PC-9 (cell line): ENCODE measurements at regions of chr14 and their contacts with region 1.

Region 1: GRCh38 chr14:103104654-103105452 is 10.3 kb downstream of the EXOC3L4 start:
- DNase-seq: peak; percentile 76 to 93
- H3K4me3 ChIP-seq: peak overlapping the region; percentile 54; the same call in 1 of the 2 replicates
- H3K27ac ChIP-seq: no peak overlapping the region
- H3K4me1 ChIP-seq: peaks cover 68% of the 10 kb centered on the region
- H3K27me3 ChIP-seq: no peaks in the 10 kb centered on the region
- CTCF ChIP-seq: peak; percentile 100

Region 2: GRCh38 chr14:101957406-101958234 is 1147.2 kb before region 1 on chr14:
- CTCF ChIA-PET with region 1: no interaction called
- POLR2A ChIA-PET with region 1: interaction called, 10 read pairs
- intact Hi-C with region 1: no loop called
- DNase-seq: no peak
- H3K4me3 ChIP-seq: no peak overlapping the region
- H3K27ac ChIP-seq: no peak overlapping the region
- H3K4me1 ChIP-seq: peaks cover 14% of the 10 kb centered on the region
- H3K27me3 ChIP-seq: no peaks in the 10 kb centered on the region
- CTCF ChIP-seq: no peak

Region 3: GRCh38 chr14:103121846-103122584 is 17.2 kb after region 1 on chr14:
- CTCF ChIA-PET with region 1: interaction called, 43 read pairs
- POLR2A ChIA-PET with region 1: interaction called, 6 read pairs
- intact Hi-C with region 1: loop called (anchors 1 kb)
- DNase-seq: peak; percentile 100
- H3K4me3 ChIP-seq: peak overlapping the region; percentile 81
- H3K27ac ChIP-seq: peak overlapping the region; percentile 86
- H3K4me1 ChIP-seq: peaks cover 55% of the 10 kb centered on the region
- H3K27me3 ChIP-seq: no peaks in the 10 kb centered on the region
- CTCF ChIP-seq: no peak

Region 4: GRCh38 chr14:103160866-103161391 is 56.1 kb after region 1 on chr14:
- CTCF ChIA-PET with region 1: interaction called, 10 read pairs
- POLR2A ChIA-PET with region 1: interaction called, 16 read pairs
- intact Hi-C with region 1: loop called (anchors 1 kb)
- DNase-seq: peak; percentile 95 to 100
- H3K4me3 ChIP-seq: no peak overlapping the region
- H3K27ac ChIP-seq: peak overlapping the region; percentile 89
- H3K4me1 ChIP-seq: peaks cover 68% of the 10 kb centered on the region
- H3K27me3 ChIP-seq: no peaks in the 10 kb centered on the region
- CTCF ChIP-seq: no peak

Region 5: DNA sequence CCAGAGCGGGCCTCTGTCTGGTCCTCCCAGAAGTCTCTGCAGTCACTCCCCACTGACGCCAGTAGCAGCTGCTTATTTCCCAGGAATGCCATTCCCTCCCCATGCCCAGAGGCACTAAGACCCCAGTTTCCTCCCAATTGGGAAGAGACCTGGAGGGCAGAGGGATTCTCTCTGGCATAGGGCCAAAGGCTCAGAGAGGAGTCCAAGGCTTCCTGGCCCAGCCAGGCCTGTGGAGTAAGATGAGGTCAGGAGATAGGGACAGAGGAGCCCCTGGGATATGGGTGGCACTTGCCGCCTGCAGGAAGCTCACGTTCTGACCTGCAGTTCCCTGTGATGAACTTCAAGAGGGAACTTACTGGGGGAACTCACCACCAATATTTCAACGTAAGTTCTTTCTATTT is 87.5 kb after region 1 on chr14:
- CTCF ChIA-PET with region 1: no interaction called
- POLR2A ChIA-PET with region 1: no interaction called
- intact Hi-C with region 1: no loop called
- DNase-seq: no peak
- H3K4me3 ChIP-seq: no peak overlapping the region
- H3K27ac ChIP-seq: peak overlapping the region; percentile 7; the same call in 1 of the 2 replicates
- H3K4me1 ChIP-seq: peaks cover 49% of the 10 kb centered on the region
- H3K27me3 ChIP-seq: no peaks in the 10 kb centered on the region
- CTCF ChIP-seq: no peak

Region 6: GRCh38 chr14:103292426-103293374 is 187.8 kb after region 1 on chr14:
- CTCF ChIA-PET with region 1: interaction called, 18 read pairs
- POLR2A ChIA-PET with region 1: no interaction called
- intact Hi-C with region 1: loop called (anchors 1 kb)
- DNase-seq: peak; percentile 68 to 90
- H3K4me3 ChIP-seq: no peak overlapping the region
- H3K27ac ChIP-seq: no peak overlapping the region
- H3K4me1 ChIP-seq: peaks cover 34% of the 10 kb centered on the region
- H3K27me3 ChIP-seq: no peaks in the 10 kb centered on the region
- CTCF ChIP-seq: peak; percentile 100

Region 7: GRCh38 chr14:103391048-103391447 is 286.2 kb after region 1 on chr14:
- CTCF ChIA-PET with region 1: interaction called, 11 read pairs
- POLR2A ChIA-PET with region 1: no interaction called
- intact Hi-C with region 1: loop called (anchors 10 kb)
- DNase-seq: peak; percentile 45 to 72
- H3K4me3 ChIP-seq: no peak overlapping the region
- H3K27ac ChIP-seq: no peak overlapping the region
- H3K4me1 ChIP-seq: peaks cover 57% of the 10 kb centered on the region
- H3K27me3 ChIP-seq: no peaks in the 10 kb centered on the region
- CTCF ChIP-seq: peak; percentile 97

Region 8: DNA sequence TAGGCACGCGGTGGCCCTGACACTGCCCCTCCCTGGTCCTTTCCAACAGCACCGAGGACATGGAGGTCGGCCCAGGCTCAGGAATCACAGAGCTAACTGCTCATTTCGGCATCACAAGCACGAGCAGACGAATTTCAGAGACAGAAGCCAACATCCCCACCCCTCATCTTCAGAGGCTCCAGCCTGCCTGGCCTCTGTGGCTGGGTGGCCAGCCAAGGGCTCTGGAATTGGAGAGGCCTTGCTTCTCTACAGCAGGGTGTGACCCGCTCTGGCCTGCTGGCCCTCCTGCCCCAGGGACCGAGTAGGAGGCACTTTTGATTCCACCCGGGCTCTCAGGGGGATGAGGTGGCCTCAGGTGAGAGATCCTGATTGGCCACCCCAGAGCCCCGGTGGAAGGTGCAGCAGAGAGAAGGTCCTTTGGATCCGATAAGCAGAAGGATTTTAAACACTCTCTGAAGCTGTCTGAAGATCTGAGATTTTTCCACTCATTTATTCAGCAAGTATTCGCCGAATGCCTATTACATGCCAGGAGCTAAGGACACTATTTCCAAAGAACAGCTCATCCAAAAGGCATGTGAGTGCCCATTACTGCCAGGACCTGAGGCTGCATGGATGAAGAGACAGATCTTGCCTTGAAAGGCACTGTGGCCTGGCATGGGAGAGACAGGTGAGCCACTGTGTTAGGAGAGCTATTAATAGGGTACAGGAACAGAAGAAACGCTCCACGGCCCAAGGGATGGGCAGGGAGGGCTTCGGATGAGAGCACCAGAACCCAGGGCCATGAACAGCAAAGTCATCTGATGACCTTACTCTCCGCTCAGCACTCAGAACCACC is 447.4 kb after region 1 on chr14:
- CTCF ChIA-PET with region 1: no interaction called
- POLR2A ChIA-PET with region 1: no interaction called
- intact Hi-C with region 1: no loop called
- DNase-seq: peak; percentile 73 to 78
- H3K4me3 ChIP-seq: no peak overlapping the region
- H3K27ac ChIP-seq: 0 out of 2 replicates have a peak overlapping the region, but pooled peaks have one; percentile 1
- H3K4me1 ChIP-seq: peaks cover 12% of the 10 kb centered on the region; the same call in 1 of the 2 replicates
- H3K27me3 ChIP-seq: no peaks in the 10 kb centered on the region
- CTCF ChIP-seq: no peak